ENCODE measurements at regions of chr2 and their contacts with region 1.

Region 1: DNA sequence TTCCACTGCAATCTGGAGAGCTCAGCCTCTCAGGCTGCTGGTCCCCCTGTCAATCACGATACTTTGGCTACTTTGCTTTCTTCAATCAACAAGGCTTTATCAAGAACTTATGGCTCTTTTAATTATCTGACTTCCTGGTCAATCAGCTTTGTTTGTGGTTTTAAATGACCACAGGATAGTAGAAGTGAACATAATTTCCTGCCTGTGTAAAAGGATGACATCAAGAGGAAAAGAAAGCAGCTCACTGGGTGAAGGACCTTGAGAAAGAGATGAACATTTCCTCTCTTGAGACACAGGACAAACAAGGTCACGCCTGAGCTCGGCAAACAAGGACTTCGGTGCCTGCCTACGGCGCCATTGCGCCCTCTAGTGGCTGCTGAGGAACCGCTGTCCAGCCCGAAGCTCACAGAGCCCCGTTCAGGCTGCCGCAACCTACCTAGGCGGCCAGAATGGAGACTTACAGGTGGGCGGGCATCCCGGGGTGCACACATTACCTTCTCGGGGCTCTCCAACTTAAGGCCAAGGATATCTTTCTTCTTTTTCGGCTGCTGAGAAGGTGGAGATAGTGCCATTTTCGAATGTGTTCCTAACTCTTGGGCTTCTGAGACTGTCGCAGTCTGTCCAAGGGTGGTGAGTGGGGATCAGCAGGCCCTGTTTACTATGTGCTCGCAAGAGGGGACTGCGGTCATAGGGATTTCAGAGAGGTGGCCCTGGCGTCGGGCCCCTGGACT is 54.0 kb downstream of the IL1RL2 start:
- DNase-seq: peak; percentile 55 to 88 (median 80)
- ATAC-seq: peak; percentile 95
- H3K4me3 ChIP-seq: no peak overlapping the region
- H3K4me3 Mint-ChIP-seq: peak overlapping the region in 5 of 10 donors; percentile 12 to 41 (median 18)
- H3K27ac ChIP-seq: no peak overlapping the region
- H3K27ac Mint-ChIP-seq: peak overlapping the region in 5 of 9 donors; percentile 25 to 72 (median 56)
- H3K4me1 ChIP-seq: peaks cover 7 to 10% of the 10 kb centered on the region in 2 donors
- H3K4me1 Mint-ChIP-seq: peaks cover 6 to 31% (median 9%) of the 10 kb centered on the region in 7 donors
- H3K27me3 ChIP-seq: peaks cover 0 to 3% of the 10 kb centered on the region in 2 donors
- H3K27me3 Mint-ChIP-seq: peaks cover 0 to 2% (median 0%) of the 10 kb centered on the region in 5 donors

Region 2: DNA sequence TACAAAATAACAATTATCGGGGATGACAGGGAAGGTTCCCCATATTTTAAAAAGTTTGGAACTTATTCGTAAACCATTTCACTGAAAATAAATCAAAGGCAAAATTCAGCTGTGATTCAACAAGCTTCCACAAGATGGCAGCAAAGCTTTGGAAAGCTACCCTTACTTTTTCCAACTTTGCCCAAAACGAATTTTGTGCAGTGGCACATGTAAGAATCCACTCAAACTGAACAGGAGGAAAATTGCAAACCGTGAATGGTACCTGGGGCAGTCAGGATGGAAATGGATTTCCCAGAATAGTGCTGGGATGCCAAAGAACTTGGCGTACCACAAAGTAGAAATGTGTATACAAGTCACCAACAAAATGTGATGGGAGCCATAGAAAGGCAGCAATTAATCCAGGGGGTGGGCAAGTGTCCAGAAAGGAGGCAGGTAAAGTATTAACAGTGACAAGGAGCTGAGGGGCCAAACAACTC is 1228.1 kb before region 1 on chr2:
- CTCF ChIA-PET with region 1: no interaction called
- POLR2A ChIA-PET with region 1: no interaction called
- intact Hi-C with region 1: loop called in 1 of 2 experiments (anchors 2 kb)
- DNase-seq: peak in 7 of 9 donors; percentile 16 to 51 (median 38)
- ATAC-seq: no peak
- H3K4me3 ChIP-seq: no peak overlapping the region
- H3K4me3 Mint-ChIP-seq: no peak overlapping the region
- H3K27ac ChIP-seq: no peak overlapping the region
- H3K27ac Mint-ChIP-seq: no peak overlapping the region
- H3K4me1 ChIP-seq: no peaks in the 10 kb centered on the region
- H3K4me1 Mint-ChIP-seq: peaks cover 6 to 28% (median 12%) of the 10 kb centered on the region in 7 donors
- H3K27me3 ChIP-seq: no peaks in the 10 kb centered on the region
- H3K27me3 Mint-ChIP-seq: no peaks in the 10 kb centered on the region

Region 3: GRCh38 chr2:101419096-101419663 is 821.6 kb before region 1 on chr2:
- CTCF ChIA-PET with region 1: interaction called, 4 read pairs
- POLR2A ChIA-PET with region 1: no interaction called
- intact Hi-C with region 1: loop called in 1 of 2 experiments (anchors 1 kb)
- DNase-seq: peak in 8 of 9 donors; percentile 41 to 74 (median 68)
- ATAC-seq: peak; percentile 87
- H3K4me3 ChIP-seq: no peak overlapping the region
- H3K4me3 Mint-ChIP-seq: no peak overlapping the region
- H3K27ac ChIP-seq: no peak overlapping the region
- H3K27ac Mint-ChIP-seq: peak overlapping the region in 1 of 9 donors; percentile 64
- H3K4me1 ChIP-seq: no peaks in the 10 kb centered on the region
- H3K4me1 Mint-ChIP-seq: peaks cover 0 to 5% (median 0%) of the 10 kb centered on the region in 7 donors
- H3K27me3 ChIP-seq: no peaks in the 10 kb centered on the region
- H3K27me3 Mint-ChIP-seq: peaks cover 0 to 6% (median 0%) of the 10 kb centered on the region in 5 donors

Region 4: GRCh38 chr2:102005989-102006885 is 234.6 kb before region 1 on chr2:
- CTCF ChIA-PET with region 1: interaction called, 26 read pairs
- POLR2A ChIA-PET with region 1: no interaction called
- intact Hi-C with region 1: no loop called
- DNase-seq: peak in 3 of 9 donors; percentile 23 to 28 (median 24)
- ATAC-seq: peak; percentile 71
- H3K4me3 ChIP-seq: no peak overlapping the region
- H3K4me3 Mint-ChIP-seq: no peak overlapping the region
- H3K27ac ChIP-seq: no peak overlapping the region
- H3K27ac Mint-ChIP-seq: no peak overlapping the region
- H3K4me1 ChIP-seq: peaks cover 0 to 12% of the 10 kb centered on the region in 2 donors
- H3K4me1 Mint-ChIP-seq: peaks cover 0 to 9% (median 0%) of the 10 kb centered on the region in 7 donors
- H3K27me3 ChIP-seq: no peaks in the 10 kb centered on the region
- H3K27me3 Mint-ChIP-seq: peaks cover 0 to 16% (median 10%) of the 10 kb centered on the region in 5 donors

Region 5: DNA sequence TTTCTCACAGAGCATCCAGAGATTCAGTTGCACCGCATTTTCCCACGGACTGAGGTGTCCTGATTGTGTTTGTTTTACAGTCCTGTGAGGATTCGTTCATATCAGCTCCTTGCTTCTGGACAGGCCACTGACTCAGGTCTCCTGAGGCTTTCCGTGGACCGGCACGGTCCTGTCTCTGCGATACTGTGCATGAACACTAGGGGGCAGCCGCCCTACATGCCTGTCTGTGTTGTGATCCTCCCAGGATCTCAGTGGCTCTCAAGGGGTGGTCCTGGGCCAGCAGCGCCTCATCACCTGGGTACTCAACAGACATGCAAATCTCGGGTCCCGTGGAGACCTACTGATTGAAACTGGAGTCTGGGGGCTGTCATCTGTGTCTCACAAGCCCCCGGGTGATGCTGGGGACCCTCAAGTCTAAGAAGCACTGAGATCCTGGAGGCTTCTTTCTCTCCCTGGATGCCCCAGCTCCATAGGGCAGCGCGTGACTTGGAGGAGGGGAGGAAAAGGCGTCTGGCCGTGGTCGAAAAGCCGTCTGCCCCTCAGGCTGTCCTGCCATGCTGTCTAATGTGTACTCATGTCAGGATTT is 220.1 kb before region 1 on chr2:
- CTCF ChIA-PET with region 1: interaction called, 141 read pairs
- POLR2A ChIA-PET with region 1: interaction called, 4 read pairs
- intact Hi-C with region 1: loop called (anchors 1 kb)
- DNase-seq: peak; percentile 61 to 82 (median 76)
- ATAC-seq: peak; percentile 96
- H3K4me3 ChIP-seq: no peak overlapping the region
- H3K4me3 Mint-ChIP-seq: no peak overlapping the region
- H3K27ac ChIP-seq: no peak overlapping the region
- H3K27ac Mint-ChIP-seq: no peak overlapping the region
- H3K4me1 ChIP-seq: no peaks in the 10 kb centered on the region
- H3K4me1 Mint-ChIP-seq: peaks cover 0 to 12% (median 0%) of the 10 kb centered on the region in 7 donors
- H3K27me3 ChIP-seq: no peaks in the 10 kb centered on the region
- H3K27me3 Mint-ChIP-seq: peaks cover 0 to 5% (median 0%) of the 10 kb centered on the region in 5 donors

Region 6: GRCh38 chr2:102082571-102083392 is 158.0 kb before region 1 on chr2:
- CTCF ChIA-PET with region 1: interaction called, 3 read pairs
- POLR2A ChIA-PET with region 1: no interaction called
- intact Hi-C with region 1: loop called in 1 of 2 experiments (anchors 5 kb)
- DNase-seq: peak in 8 of 9 donors; percentile 36 to 75 (median 64)
- ATAC-seq: peak; percentile 83
- H3K4me3 ChIP-seq: peak overlapping the region; percentile 24
- H3K4me3 Mint-ChIP-seq: peak overlapping the region; percentile 67 to 88 (median 80)
- H3K27ac ChIP-seq: peak overlapping the region; percentile 61
- H3K27ac Mint-ChIP-seq: peak overlapping the region; percentile 84 to 95 (median 91)
- H3K4me1 ChIP-seq: peaks cover 10 to 20% of the 10 kb centered on the region in 2 donors
- H3K4me1 Mint-ChIP-seq: peaks cover 19 to 49% (median 42%) of the 10 kb centered on the region in 7 donors
- H3K27me3 ChIP-seq: no peaks in the 10 kb centered on the region
- H3K27me3 Mint-ChIP-seq: peaks cover 0 to 20% (median 0%) of the 10 kb centered on the region in 5 donors

Region 7: DNA sequence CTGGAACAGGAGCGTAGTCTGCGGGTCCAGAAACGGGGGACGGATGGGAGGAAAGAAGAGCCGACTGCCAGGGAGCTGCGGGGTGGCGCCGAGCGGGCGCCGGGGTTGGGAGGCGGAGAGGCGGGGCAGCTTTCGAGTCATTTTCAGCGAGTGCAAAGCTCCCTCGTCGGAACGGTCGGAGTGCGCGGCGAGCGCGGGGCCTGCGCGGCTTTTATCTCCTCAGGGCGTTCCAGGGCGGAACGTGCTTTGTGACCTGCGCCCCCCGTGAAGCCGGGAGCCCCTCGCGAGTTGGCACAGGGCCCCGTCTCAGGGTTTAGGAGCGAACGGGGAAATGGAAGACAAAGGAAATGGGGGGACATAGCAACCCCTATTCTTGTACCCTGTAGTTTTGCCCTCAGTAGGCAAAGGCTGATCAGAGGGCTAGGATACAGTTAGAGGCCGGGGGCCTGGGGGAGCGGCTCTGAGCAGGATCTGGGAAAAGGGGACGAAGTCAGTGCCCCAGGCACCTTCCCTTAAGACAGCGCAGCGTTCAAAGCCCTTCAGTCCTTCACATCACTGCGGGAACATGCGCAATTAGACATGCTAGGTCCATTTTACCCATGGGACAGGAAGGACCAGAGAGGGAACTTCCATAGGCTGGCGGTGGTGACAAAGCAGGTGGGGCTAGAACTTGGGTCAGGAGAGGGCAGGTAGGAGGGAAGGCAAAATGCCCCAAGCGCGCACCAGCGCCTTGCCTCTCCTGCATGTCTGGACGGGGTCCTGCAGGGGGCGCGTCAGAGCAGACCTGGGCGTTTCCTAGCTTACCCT is 10.4 kb after region 1 on chr2:
- CTCF ChIA-PET with region 1: interaction called, 25 read pairs
- POLR2A ChIA-PET with region 1: no interaction called
- intact Hi-C with region 1: no loop called
- DNase-seq: peak; percentile 28 to 63 (median 57)
- ATAC-seq: peak; percentile 90
- H3K4me3 ChIP-seq: peak overlapping the region; percentile 75
- H3K4me3 Mint-ChIP-seq: peak overlapping the region; percentile 86 to 99 (median 94)
- H3K27ac ChIP-seq: no peak overlapping the region
- H3K27ac Mint-ChIP-seq: peak overlapping the region in 7 of 9 donors; percentile 56 to 94 (median 78)
- H3K4me1 ChIP-seq: peaks cover 0 to 18% of the 10 kb centered on the region in 2 donors
- H3K4me1 Mint-ChIP-seq: peaks cover 7 to 44% (median 14%) of the 10 kb centered on the region in 7 donors
- H3K27me3 ChIP-seq: no peaks in the 10 kb centered on the region
- H3K27me3 Mint-ChIP-seq: peaks cover 0 to 5% (median 2%) of the 10 kb centered on the region in 5 donors